CD8-positive, alpha-beta T cell (primary cell): ENCODE measurements at regions of chr2 and their contacts with region 1.

Region 1: DNA sequence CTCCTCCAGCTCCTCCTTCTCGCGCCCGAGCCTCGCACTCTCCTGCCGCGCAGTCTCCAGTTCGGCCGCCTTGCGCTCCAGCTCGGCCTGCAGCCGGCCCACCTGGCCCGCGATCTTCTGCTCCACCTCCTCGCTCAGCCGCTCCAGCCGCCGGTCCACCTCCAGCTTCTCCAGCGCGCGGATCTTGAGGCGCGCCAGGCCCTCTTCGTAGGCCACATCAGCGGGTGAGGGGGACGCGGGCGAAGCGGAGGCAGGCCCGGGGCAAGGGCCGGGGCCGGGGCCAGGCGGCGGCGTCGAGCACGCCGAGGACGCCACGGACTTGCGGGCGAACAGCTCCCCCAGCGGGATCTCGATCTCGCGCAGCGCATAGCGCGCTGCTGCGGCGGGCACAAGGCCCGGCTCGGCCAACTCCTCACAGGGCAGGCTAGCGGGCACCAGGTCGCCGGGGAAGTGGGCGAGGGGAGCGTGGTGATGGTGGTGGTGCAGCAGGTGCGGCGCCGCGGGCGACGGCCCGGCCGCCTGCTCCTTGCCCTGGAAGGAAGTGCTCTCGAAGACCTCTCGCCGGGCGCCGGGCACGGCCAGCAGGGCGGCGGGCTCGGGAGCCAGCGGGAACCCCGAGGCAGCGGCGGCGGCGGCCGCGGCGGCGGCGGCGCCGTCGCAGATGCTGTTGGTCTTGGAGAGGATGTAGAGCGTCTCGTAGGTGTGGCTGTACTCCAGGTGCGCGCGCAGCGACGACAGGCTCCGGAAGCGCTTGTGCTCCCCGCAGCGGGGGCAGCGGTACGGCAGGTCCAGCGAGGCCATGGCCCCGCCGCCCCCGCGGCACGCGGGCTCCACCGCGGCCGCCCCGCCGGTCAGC is 15.2 kb downstream of the FBXO41 start:
- DNase-seq: peak; percentile 52 to 90 (median 81)
- ATAC-seq: peak; percentile 98
- H3K4me3 ChIP-seq: peak overlapping the region; percentile 42 to 52
- H3K4me3 Mint-ChIP-seq: peak overlapping the region; percentile 70
- H3K27ac ChIP-seq: peak overlapping the region in 1 of 2 experiments; percentile 37
- H3K27ac Mint-ChIP-seq: no peak overlapping the region
- H3K4me1 ChIP-seq: peaks cover 12% of the 10 kb centered on the region
- H3K4me1 Mint-ChIP-seq: peaks cover 29% of the 10 kb centered on the region
- H3K27me3 ChIP-seq: no peaks in the 10 kb centered on the region
- H3K27me3 Mint-ChIP-seq: no peaks in the 10 kb centered on the region
- CTCF ChIP-seq: peak; percentile 21

Region 2: DNA sequence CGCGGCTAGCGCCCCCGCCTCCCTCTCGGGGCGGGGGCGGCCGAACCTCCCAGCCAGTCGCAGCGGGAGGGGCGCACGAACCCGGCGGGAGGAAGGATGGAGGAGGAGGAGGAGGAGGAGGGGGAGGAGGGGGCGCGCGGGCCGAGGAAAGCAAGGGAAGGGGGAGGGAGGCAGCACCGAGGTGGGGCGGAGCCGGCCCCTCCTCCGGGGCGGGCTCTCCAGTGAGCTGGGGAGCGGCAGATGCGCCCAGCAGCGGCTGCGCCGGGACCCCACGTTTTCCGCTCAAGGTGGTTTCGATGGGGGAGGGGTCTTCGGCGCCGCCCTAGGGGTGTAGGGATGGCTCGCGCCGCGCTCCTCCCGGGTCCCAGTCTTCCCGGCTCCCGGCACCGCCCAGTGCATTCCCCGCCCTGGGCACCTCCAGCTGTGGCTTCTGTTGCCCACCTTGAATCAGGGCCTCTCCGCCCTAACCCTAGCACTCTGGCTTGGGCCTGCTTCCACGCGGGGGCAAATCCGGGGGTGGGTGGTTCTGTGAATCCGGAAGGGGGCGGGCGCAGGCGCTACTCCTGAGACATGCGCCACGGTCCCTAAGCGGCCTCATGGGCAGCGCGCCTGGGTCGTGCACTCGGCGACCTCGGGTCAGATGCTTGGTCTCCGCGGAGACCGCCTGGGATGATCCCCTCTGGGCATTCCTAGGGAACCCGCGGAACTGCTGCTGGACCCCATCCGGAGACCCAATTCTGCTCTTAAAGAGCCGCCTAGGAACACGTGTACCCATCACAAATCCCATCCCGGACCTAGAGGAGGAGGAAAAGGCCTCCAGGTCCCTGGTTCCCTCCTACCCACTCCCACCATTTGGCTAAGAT is 15.5 kb after region 1 on chr2 and contains the start of gene FBXO41:
- CTCF ChIA-PET with region 1: interaction called, 11 read pairs
- POLR2A ChIA-PET with region 1: no interaction called
- intact Hi-C with region 1: loop called (anchors 1 to 2 kb)
- DNase-seq: peak; percentile 26 to 87 (median 68)
- ATAC-seq: peak; percentile 84
- H3K4me3 ChIP-seq: peak within 1 kb of the TSS; percentile 77 to 81
- H3K4me3 Mint-ChIP-seq: peak within 1 kb of the TSS; percentile 91
- H3K27ac ChIP-seq: peak within 1 kb of the TSS; percentile 61 to 74
- H3K27ac Mint-ChIP-seq: peak within 1 kb of the TSS; percentile 75
- H3K4me1 ChIP-seq: peaks cover 20% of the 10 kb centered on the region
- H3K4me1 Mint-ChIP-seq: peaks cover 24% of the 10 kb centered on the region
- H3K27me3 ChIP-seq: no peaks in the 10 kb centered on the region
- H3K27me3 Mint-ChIP-seq: peaks cover 8% of the 10 kb centered on the region
- CTCF ChIP-seq: no peak
- total RNA-seq, gene FBXO41: 22.1 to 23.6 TPM

Region 3: GRCh38 chr2:73293534-73294171 is 24.6 kb after region 1 on chr2 and contains the start of gene EGR4:
- CTCF ChIA-PET with region 1: interaction called, 11 read pairs
- POLR2A ChIA-PET with region 1: no interaction called
- intact Hi-C with region 1: no loop called
- DNase-seq: peak; percentile 74 to 96 (median 84)
- ATAC-seq: peak; percentile 92
- H3K4me3 ChIP-seq: peak within 1 kb of the TSS; percentile 51 to 73
- H3K4me3 Mint-ChIP-seq: peak within 1 kb of the TSS; percentile 78
- H3K27ac ChIP-seq: no peak within 1 kb of the TSS
- H3K27ac Mint-ChIP-seq: no peak within 1 kb of the TSS
- H3K4me1 ChIP-seq: peaks cover 26% of the 10 kb centered on the region
- H3K4me1 Mint-ChIP-seq: peaks cover 14% of the 10 kb centered on the region
- H3K27me3 ChIP-seq: peaks cover 35 to 37% of the 10 kb centered on the region in 2 experiments
- H3K27me3 Mint-ChIP-seq: peaks cover 62% of the 10 kb centered on the region
- CTCF ChIP-seq: no peak
- total RNA-seq, gene EGR4: 0.14 to 0.22 TPM